Natural killer cell (primary cell): ENCODE measurements at regions of chr13 and their contacts with region 1.

Region 1: DNA sequence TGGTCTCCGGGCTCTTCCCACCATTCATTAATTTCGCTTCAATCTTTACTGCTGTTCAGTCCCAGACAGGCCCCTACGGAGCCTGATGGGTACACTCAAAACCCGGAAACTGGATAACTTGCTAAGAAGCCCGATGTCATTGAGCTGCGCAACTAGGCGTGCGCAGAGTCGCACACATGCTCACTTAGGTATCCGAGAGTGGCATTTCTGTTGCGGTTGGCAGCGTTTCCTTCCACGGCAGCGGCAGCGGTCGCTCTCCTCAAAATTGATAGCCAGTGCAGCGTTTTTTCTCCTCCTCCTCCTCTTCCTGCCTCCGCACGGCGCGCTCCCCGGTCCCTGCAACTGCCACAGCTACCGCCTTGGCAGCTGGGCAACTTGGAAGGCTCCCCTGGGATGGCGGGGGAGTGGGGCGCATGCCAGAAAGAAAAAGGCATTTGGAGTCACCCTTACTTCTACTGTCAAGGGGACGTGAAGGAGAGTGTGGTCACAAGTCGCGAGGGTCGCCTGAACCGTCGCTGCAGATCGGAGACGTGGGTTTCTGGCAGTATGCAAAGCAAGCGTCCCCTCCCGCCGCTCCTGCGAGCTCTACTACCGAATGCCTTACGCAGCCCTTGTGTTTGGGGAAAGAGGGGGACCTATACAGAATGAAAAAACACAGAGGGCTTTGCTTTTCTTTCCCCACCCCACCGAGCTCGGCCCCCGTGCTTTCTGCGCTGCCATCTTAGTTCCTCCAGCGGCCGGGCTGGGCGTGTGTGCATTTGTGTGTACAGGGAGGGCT is 2.4 kb upstream of the MYCBP2 start:
- DNase-seq: peak; percentile 77 to 98
- ATAC-seq: peak; percentile 66 to 84 (median 70)
- H3K4me3 ChIP-seq: peak overlapping the region; percentile 88
- H3K4me3 Mint-ChIP-seq: peak overlapping the region; percentile 89
- H3K27ac ChIP-seq: peak overlapping the region; percentile 82
- H3K27ac Mint-ChIP-seq: peak overlapping the region; percentile 89 to 92
- H3K4me1 ChIP-seq: peaks cover 18% of the 10 kb centered on the region
- H3K4me1 Mint-ChIP-seq: peaks cover 41 to 51% of the 10 kb centered on the region in 2 donors
- H3K27me3 ChIP-seq: no peaks in the 10 kb centered on the region
- H3K27me3 Mint-ChIP-seq: peaks cover 0 to 7% of the 10 kb centered on the region in 2 donors
- CTCF ChIP-seq: no peak

Region 2: GRCh38 chr13:76991796-76992547 is 337.4 kb before region 1 on chr13 and contains the start of gene CLN5:
- intact Hi-C with region 1: loop called (anchors 1 kb)
- DNase-seq: peak; percentile 93 to 98
- ATAC-seq: peak; percentile 79 to 94 (median 80)
- H3K4me3 ChIP-seq: peak within 1 kb of the TSS; percentile 63
- H3K4me3 Mint-ChIP-seq: peak within 1 kb of the TSS; percentile 95
- H3K27ac ChIP-seq: peak within 1 kb of the TSS; percentile 99
- H3K27ac Mint-ChIP-seq: peak within 1 kb of the TSS; percentile 97
- H3K4me1 ChIP-seq: peaks cover 28% of the 10 kb centered on the region
- H3K4me1 Mint-ChIP-seq: peaks cover 28 to 35% of the 10 kb centered on the region in 2 donors
- H3K27me3 ChIP-seq: peaks cover 37% of the 10 kb centered on the region
- H3K27me3 Mint-ChIP-seq: peaks cover 51 to 55% of the 10 kb centered on the region in 2 donors
- CTCF ChIP-seq: no peak
- total RNA-seq, gene CLN5: 12.0 to 14.4 (median 13.9) TPM

Region 3: DNA sequence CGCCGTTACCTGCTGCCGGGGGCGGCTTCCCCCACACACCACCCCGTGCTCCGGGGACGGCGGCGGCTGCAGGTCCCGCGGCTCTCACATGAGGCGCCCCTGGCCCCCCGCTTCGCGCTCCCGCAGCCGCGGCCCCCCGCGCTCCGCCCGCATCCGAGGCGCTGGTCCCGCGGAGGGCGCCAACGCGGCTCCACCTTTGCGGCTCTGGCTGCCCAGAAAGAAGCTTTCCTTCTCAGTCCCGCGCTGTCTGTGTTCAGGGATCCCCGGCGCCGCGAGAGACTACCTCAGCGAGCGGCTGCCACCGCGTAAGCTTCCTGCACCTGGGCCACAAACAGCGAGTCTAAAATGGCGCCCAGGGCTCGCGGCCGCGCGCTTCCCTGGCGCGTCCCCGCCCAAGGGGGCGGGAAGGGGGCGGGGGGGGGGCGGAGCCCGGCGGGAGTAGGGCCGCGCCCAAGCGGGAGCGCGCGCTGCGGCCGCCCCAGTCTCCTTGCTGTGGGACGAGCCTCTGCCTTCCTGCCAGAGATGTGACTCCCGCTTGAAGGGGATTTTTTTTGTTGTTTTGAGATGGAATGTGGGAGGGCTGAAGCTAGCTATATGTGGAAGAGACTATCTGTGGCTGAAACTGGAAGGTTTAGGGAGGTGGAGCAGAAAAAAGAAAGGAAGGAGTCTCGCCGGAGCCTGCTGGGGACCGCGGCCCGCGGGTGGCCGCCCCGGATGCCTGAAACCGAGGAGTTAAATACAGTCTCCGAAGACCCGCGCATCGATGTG is 302.3 kb before region 1 on chr13 and contains the start of gene FBXL3:
- intact Hi-C with region 1: loop called (anchors 5 kb)
- DNase-seq: peak; percentile 73 to 92
- ATAC-seq: peak; percentile 71 to 90 (median 77)
- H3K4me3 ChIP-seq: peak within 1 kb of the TSS; percentile 54
- H3K4me3 Mint-ChIP-seq: peak within 1 kb of the TSS; percentile 98
- H3K27ac ChIP-seq: peak within 1 kb of the TSS; percentile 92
- H3K27ac Mint-ChIP-seq: peak within 1 kb of the TSS; percentile 87 to 88
- H3K4me1 ChIP-seq: peaks cover 17% of the 10 kb centered on the region
- H3K4me1 Mint-ChIP-seq: peaks cover 49 to 52% of the 10 kb centered on the region in 2 donors
- H3K27me3 ChIP-seq: peaks cover 3% of the 10 kb centered on the region
- H3K27me3 Mint-ChIP-seq: peaks cover 22 to 28% of the 10 kb centered on the region in 2 donors
- CTCF ChIP-seq: no peak
- total RNA-seq, gene FBXL3: 57.1 to 61.9 (median 58.0) TPM

Region 4: GRCh38 chr13:77274126-77274525 is 55.2 kb before region 1 on chr13:
- intact Hi-C with region 1: loop called (anchors 5 kb)
- DNase-seq: peak in 1 of 2 donors; percentile 20
- ATAC-seq: no peak
- H3K4me3 ChIP-seq: no peak overlapping the region
- H3K4me3 Mint-ChIP-seq: no peak overlapping the region
- H3K27ac ChIP-seq: no peak overlapping the region
- H3K27ac Mint-ChIP-seq: peak overlapping the region in 1 of 2 donors; percentile 0
- H3K4me1 ChIP-seq: no peaks in the 10 kb centered on the region
- H3K4me1 Mint-ChIP-seq: peaks cover 9 to 10% of the 10 kb centered on the region in 2 donors
- H3K27me3 ChIP-seq: no peaks in the 10 kb centered on the region
- H3K27me3 Mint-ChIP-seq: no peaks in the 10 kb centered on the region
- CTCF ChIP-seq: peak; percentile 19

Region 5: GRCh38 chr13:77477299-77477848 is 148.1 kb after region 1 on chr13:
- intact Hi-C with region 1: loop called (anchors 2 kb)
- DNase-seq: no peak
- ATAC-seq: no peak
- H3K4me3 ChIP-seq: no peak overlapping the region
- H3K4me3 Mint-ChIP-seq: no peak overlapping the region
- H3K27ac ChIP-seq: no peak overlapping the region
- H3K27ac Mint-ChIP-seq: no peak overlapping the region
- H3K4me1 ChIP-seq: no peaks in the 10 kb centered on the region
- H3K4me1 Mint-ChIP-seq: peaks cover 6 to 8% of the 10 kb centered on the region in 2 donors
- H3K27me3 ChIP-seq: no peaks in the 10 kb centered on the region
- H3K27me3 Mint-ChIP-seq: peaks cover 0 to 11% of the 10 kb centered on the region in 2 donors
- CTCF ChIP-seq: no peak

Region 6: DNA sequence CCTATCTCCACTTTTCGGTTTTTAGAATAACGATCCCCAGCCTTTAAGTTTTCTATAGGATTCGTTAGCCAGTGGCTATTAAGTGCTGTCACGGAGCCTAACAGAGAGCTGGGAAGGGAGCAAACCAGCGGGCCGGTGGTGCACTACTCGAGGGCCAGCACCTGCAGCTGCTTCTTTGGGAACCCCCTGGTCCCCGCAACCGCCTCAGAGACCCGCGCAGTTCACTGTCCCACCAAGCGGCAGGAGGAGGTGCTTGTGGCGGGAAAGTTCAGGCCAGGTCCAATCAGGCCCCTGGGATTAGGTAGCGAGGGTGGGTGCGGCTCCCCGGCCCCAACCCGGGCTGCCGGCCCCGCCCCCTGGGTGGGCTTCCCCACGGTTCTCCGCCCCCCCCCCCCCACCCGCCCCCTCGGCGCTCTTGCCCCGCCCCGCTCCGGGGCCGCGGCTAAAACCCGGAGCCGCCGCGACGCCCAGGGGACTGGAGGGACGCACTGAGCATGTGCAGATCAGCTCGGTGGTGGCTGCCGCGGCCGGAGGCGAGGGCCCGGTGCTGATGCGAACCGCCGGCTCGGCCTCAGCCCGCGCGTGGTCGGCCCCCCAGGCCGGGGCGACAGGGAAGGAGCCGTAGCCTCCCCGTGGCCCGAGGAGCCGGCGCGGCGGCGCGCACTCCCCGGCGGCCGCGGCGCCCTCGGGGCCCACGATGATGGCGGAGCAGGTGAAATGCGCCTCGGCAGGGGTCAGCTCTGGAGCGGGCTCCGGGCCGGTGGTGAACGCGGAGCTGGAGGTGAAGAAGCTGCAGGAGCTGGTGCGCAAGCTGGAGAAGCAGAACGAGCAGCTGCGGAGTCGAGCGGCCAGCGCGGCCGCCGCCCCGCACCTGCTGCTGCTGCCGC is 368.1 kb after region 1 on chr13 and contains the start of gene SLAIN1:
- intact Hi-C with region 1: loop called (anchors 2 kb)
- DNase-seq: peak; percentile 72 to 93
- ATAC-seq: peak; percentile 79 to 88 (median 81)
- H3K4me3 ChIP-seq: peak within 1 kb of the TSS; percentile 97
- H3K4me3 Mint-ChIP-seq: peak within 1 kb of the TSS; percentile 99
- H3K27ac ChIP-seq: peak within 1 kb of the TSS; percentile 75
- H3K27ac Mint-ChIP-seq: peak within 1 kb of the TSS; percentile 87 to 92
- H3K4me1 ChIP-seq: peaks cover 4% of the 10 kb centered on the region
- H3K4me1 Mint-ChIP-seq: peaks cover 26 to 29% of the 10 kb centered on the region in 2 donors
- H3K27me3 ChIP-seq: no peaks in the 10 kb centered on the region
- H3K27me3 Mint-ChIP-seq: peaks cover 4 to 7% of the 10 kb centered on the region in 2 donors
- CTCF ChIP-seq: no peak
- total RNA-seq, gene SLAIN1: 14.9 to 29.0 (median 25.7) TPM

Region 7: DNA sequence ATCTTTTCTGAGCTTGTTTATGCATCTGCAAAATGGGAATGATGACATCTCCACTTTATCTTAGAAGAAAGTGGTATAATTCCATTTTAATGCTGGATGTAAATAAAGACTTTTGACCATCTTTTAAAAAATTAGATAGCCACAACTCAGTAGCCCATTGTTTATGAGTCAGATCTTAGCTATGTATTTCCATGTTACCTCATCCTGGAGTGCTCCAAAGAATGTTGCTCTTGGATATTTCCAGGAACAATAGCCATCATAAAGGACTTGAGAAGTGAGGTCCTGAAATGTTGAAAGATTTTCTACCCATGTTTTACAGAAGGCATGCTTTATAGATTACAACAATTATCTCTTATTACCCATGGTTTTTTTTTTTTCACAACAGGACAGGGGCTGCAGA is 818.6 kb after region 1 on chr13:
- intact Hi-C with region 1: no loop called
- DNase-seq: no peak
- ATAC-seq: no peak
- H3K4me3 ChIP-seq: no peak overlapping the region
- H3K4me3 Mint-ChIP-seq: no peak overlapping the region
- H3K27ac ChIP-seq: no peak overlapping the region
- H3K27ac Mint-ChIP-seq: no peak overlapping the region
- H3K4me1 ChIP-seq: no peaks in the 10 kb centered on the region
- H3K4me1 Mint-ChIP-seq: no peaks in the 10 kb centered on the region
- H3K27me3 ChIP-seq: no peaks in the 10 kb centered on the region
- H3K27me3 Mint-ChIP-seq: peaks cover 0 to 9% of the 10 kb centered on the region in 2 donors
- CTCF ChIP-seq: no peak

Region 8: DNA sequence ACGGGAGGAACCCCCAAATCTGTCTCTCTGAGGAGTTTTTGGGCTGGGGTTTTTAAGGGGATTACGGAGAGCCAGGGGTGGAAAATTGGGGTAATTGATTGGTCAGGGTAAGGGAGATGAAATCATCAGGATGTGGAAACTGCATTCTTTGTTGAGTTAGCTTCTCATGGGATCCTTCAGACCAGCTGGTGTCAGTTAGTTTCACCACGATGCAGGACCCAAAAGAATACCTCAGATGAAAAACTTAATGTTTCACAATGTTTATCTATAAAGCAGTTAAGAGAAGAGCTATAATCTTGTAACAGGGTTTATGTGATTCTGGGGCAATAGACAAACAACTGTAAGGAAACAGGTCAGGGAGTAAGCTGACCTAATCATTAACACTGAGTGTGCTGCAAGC is 1043.3 kb after region 1 on chr13:
- intact Hi-C with region 1: no loop called
- DNase-seq: no peak
- ATAC-seq: no peak
- H3K4me3 ChIP-seq: no peak overlapping the region
- H3K4me3 Mint-ChIP-seq: no peak overlapping the region
- H3K27ac ChIP-seq: no peak overlapping the region
- H3K27ac Mint-ChIP-seq: no peak overlapping the region
- H3K4me1 ChIP-seq: no peaks in the 10 kb centered on the region
- H3K4me1 Mint-ChIP-seq: no peaks in the 10 kb centered on the region
- H3K27me3 ChIP-seq: no peaks in the 10 kb centered on the region
- H3K27me3 Mint-ChIP-seq: no peaks in the 10 kb centered on the region
- CTCF ChIP-seq: no peak